B cell (primary cell): ENCODE measurements at regions of chr14 and their contacts with region 1.

Region 1: GRCh38 chr14:50860478-50861086 is 11.3 kb upstream of the ABHD12B start:
- DNase-seq: peak; percentile 90
- ATAC-seq: peak; percentile 71
- H3K4me3 ChIP-seq: peak overlapping the region; percentile 58 to 92 (median 69)
- H3K4me3 Mint-ChIP-seq: peak overlapping the region; percentile 95
- H3K27ac ChIP-seq: peak overlapping the region; percentile 34 to 44
- H3K27ac Mint-ChIP-seq: peak overlapping the region; percentile 91
- H3K4me1 ChIP-seq: peaks cover 9 to 14% of the 10 kb centered on the region in 2 donors
- H3K4me1 Mint-ChIP-seq: peaks cover 15% of the 10 kb centered on the region
- H3K27me3 ChIP-seq: no peaks in the 10 kb centered on the region
- H3K27me3 Mint-ChIP-seq: peaks cover 2% of the 10 kb centered on the region
- CTCF ChIP-seq: peak; percentile 87

Region 2: GRCh38 chr14:50025776-50026175 is 834.8 kb before region 1 on chr14:
- CTCF ChIA-PET with region 1: no interaction called
- POLR2A ChIA-PET with region 1: no interaction called
- intact Hi-C with region 1: no loop called
- DNase-seq: no peak
- ATAC-seq: no peak
- H3K4me3 ChIP-seq: no peak overlapping the region
- H3K4me3 Mint-ChIP-seq: no peak overlapping the region
- H3K27ac ChIP-seq: no peak overlapping the region
- H3K27ac Mint-ChIP-seq: no peak overlapping the region
- H3K4me1 ChIP-seq: peaks cover 9 to 10% of the 10 kb centered on the region in 2 donors
- H3K4me1 Mint-ChIP-seq: peaks cover 18% of the 10 kb centered on the region
- H3K27me3 ChIP-seq: no peaks in the 10 kb centered on the region
- H3K27me3 Mint-ChIP-seq: no peaks in the 10 kb centered on the region
- CTCF ChIP-seq: no peak

Region 3: DNA sequence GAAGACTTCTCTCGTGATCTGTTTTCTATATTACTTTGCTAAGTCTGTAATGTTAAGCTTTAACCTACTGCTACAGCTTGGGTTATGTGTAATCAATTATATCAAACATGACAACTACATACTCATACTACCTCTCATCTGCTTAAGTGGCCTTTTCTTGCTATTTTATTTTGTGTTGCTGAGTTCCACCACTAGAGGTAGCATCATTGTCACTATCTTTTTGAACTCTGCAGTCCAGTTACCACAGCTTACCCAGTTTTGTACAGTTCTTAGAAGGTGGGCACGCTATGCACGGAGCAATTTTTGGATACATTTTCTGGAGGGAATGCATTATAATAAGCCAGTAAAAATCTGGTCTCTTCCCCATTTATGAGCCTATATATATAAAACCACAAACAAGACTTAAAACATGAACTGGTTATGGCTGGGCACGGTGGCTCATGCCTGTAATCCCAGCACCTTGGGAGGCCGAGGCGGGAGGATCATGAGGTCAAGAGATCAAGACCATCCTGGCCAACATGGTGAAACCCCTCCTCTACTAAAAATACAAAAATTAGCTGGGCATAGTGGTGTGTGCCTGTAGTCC is 240.9 kb before region 1 on chr14:
- CTCF ChIA-PET with region 1: interaction called, 23 read pairs
- POLR2A ChIA-PET with region 1: no interaction called
- intact Hi-C with region 1: no loop called
- DNase-seq: peak; percentile 56
- ATAC-seq: no peak
- H3K4me3 ChIP-seq: no peak overlapping the region
- H3K4me3 Mint-ChIP-seq: no peak overlapping the region
- H3K27ac ChIP-seq: no peak overlapping the region
- H3K27ac Mint-ChIP-seq: no peak overlapping the region
- H3K4me1 ChIP-seq: no peaks in the 10 kb centered on the region
- H3K4me1 Mint-ChIP-seq: peaks cover 5% of the 10 kb centered on the region
- H3K27me3 ChIP-seq: no peaks in the 10 kb centered on the region
- H3K27me3 Mint-ChIP-seq: no peaks in the 10 kb centered on the region
- CTCF ChIP-seq: peak; percentile 73

Region 4: GRCh38 chr14:50756300-50756699 is 104.3 kb before region 1 on chr14:
- CTCF ChIA-PET with region 1: interaction called, 41 read pairs
- POLR2A ChIA-PET with region 1: interaction called, 5 read pairs
- intact Hi-C with region 1: no loop called
- DNase-seq: peak; percentile 95
- ATAC-seq: peak; percentile 93
- H3K4me3 ChIP-seq: no peak overlapping the region
- H3K4me3 Mint-ChIP-seq: no peak overlapping the region
- H3K27ac ChIP-seq: peak overlapping the region; percentile 92 to 93
- H3K27ac Mint-ChIP-seq: no peak overlapping the region
- H3K4me1 ChIP-seq: peaks cover 15 to 21% of the 10 kb centered on the region in 2 donors
- H3K4me1 Mint-ChIP-seq: peaks cover 4% of the 10 kb centered on the region
- H3K27me3 ChIP-seq: no peaks in the 10 kb centered on the region
- H3K27me3 Mint-ChIP-seq: no peaks in the 10 kb centered on the region
- CTCF ChIP-seq: no peak

Region 5: GRCh38 chr14:50785457-50786063 is 75.0 kb before region 1 on chr14:
- CTCF ChIA-PET with region 1: interaction called, 178 read pairs
- POLR2A ChIA-PET with region 1: interaction called, 10 read pairs
- intact Hi-C with region 1: loop called (anchors 1 kb)
- DNase-seq: peak; percentile 40
- ATAC-seq: peak; percentile 29
- H3K4me3 ChIP-seq: peak overlapping the region in 1 of 5 experiments; percentile 18
- H3K4me3 Mint-ChIP-seq: peak overlapping the region; percentile 52
- H3K27ac ChIP-seq: peak overlapping the region; percentile 33 to 47
- H3K27ac Mint-ChIP-seq: peak overlapping the region; percentile 81
- H3K4me1 ChIP-seq: peaks cover 62 to 65% of the 10 kb centered on the region in 2 donors
- H3K4me1 Mint-ChIP-seq: peaks cover 63% of the 10 kb centered on the region
- H3K27me3 ChIP-seq: no peaks in the 10 kb centered on the region
- H3K27me3 Mint-ChIP-seq: no peaks in the 10 kb centered on the region
- CTCF ChIP-seq: no peak

Region 6: DNA sequence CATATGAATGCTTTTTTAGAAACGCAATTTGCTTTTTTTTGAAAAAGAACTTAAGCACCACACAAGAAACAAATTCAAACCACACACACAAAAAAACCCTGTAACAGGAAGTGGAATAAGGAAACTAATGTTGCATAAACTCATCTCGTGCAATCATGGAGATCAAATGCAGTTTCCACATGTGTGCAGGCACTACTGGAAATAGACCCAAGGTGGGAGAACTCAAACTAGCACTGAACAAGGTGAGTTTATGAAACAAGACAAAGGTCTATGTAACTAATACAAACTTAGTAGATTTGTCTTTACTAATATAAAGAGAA is 47.1 kb before region 1 on chr14:
- CTCF ChIA-PET with region 1: interaction called, 19 read pairs
- POLR2A ChIA-PET with region 1: no interaction called
- intact Hi-C with region 1: no loop called
- DNase-seq: peak; percentile 67
- ATAC-seq: peak; percentile 72
- H3K4me3 ChIP-seq: peak overlapping the region in 4 of 5 experiments; percentile 10 to 57 (median 40)
- H3K4me3 Mint-ChIP-seq: peak overlapping the region; percentile 84
- H3K27ac ChIP-seq: peak overlapping the region; percentile 38 to 54
- H3K27ac Mint-ChIP-seq: peak overlapping the region; percentile 90
- H3K4me1 ChIP-seq: peaks cover 46 to 49% of the 10 kb centered on the region in 2 donors
- H3K4me1 Mint-ChIP-seq: peaks cover 60% of the 10 kb centered on the region
- H3K27me3 ChIP-seq: no peaks in the 10 kb centered on the region
- H3K27me3 Mint-ChIP-seq: no peaks in the 10 kb centered on the region
- CTCF ChIP-seq: no peak

Region 7: DNA sequence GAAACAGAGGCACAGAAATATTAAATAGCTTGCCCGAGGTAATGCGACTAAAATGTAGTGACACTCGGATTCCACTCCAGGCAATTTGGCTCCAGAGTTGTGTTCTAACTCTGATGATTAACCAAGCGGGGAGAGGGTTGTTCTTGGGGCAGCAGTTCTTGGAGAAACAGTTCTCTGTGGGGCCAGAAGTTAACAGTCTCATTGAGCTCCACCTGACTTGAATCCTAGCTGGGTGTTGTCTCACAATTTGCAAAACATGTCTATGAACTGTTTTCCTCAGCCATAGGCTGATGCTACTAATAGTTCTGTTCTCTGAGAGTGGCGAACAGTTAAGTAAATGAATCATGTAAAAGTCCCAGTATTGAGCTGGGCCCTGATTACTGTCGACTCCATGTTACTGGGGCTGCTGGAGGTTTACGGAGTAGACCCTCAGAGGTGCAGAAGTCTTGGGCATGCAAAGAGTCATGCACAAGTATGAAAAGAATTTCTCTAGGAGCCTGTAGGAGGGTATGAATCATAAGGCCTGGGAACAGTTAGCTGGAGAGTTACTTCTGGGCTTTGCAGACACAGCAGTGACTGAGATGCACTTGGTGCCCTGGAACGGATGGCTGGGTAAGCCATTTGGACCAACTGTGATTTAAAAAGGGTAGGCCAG is 14.2 kb before region 1 on chr14:
- CTCF ChIA-PET with region 1: interaction called, 21 read pairs
- POLR2A ChIA-PET with region 1: no interaction called
- intact Hi-C with region 1: no loop called
- DNase-seq: no peak
- ATAC-seq: no peak
- H3K4me3 ChIP-seq: no peak overlapping the region
- H3K4me3 Mint-ChIP-seq: no peak overlapping the region
- H3K27ac ChIP-seq: no peak overlapping the region
- H3K27ac Mint-ChIP-seq: no peak overlapping the region
- H3K4me1 ChIP-seq: no peaks in the 10 kb centered on the region
- H3K4me1 Mint-ChIP-seq: peaks cover 5% of the 10 kb centered on the region
- H3K27me3 ChIP-seq: no peaks in the 10 kb centered on the region
- H3K27me3 Mint-ChIP-seq: no peaks in the 10 kb centered on the region
- CTCF ChIP-seq: no peak

Region 8: DNA sequence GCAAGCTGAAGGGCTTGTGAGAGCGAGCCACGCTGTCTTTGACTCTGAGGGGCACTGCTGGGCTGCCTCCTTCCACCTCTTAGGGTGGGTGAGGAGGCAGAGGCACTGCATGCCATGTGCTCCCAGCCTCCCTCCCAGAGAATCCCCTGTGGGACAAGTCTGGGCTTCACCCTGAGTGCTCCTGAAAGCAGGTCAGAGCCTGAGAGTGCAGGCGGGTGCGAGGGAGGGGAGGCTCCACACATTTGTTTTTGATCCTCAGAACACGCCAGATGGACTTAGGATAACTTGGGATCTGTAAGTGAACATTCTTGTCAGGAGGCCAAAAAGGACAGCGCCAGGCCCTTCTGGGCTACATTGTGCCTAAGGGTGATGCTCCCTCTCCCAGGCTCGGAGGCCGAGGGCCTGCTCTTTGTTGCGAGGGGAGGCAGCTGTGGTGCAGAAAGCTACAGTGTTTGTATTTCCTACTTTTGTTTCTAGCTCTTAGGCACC is 534.8 kb after region 1 on chr14:
- CTCF ChIA-PET with region 1: no interaction called
- POLR2A ChIA-PET with region 1: no interaction called
- intact Hi-C with region 1: no loop called
- DNase-seq: no peak
- ATAC-seq: no peak
- H3K4me3 ChIP-seq: no peak overlapping the region
- H3K4me3 Mint-ChIP-seq: no peak overlapping the region
- H3K27ac ChIP-seq: no peak overlapping the region
- H3K27ac Mint-ChIP-seq: no peak overlapping the region
- H3K4me1 ChIP-seq: no peaks in the 10 kb centered on the region
- H3K4me1 Mint-ChIP-seq: no peaks in the 10 kb centered on the region
- H3K27me3 ChIP-seq: peaks cover 0 to 6% (median 0%) of the 10 kb centered on the region in 4 experiments
- H3K27me3 Mint-ChIP-seq: peaks cover 12% of the 10 kb centered on the region
- CTCF ChIP-seq: no peak